ENCODE measurements at regions of chr3 and their contacts with region 1.

Region 1: DNA sequence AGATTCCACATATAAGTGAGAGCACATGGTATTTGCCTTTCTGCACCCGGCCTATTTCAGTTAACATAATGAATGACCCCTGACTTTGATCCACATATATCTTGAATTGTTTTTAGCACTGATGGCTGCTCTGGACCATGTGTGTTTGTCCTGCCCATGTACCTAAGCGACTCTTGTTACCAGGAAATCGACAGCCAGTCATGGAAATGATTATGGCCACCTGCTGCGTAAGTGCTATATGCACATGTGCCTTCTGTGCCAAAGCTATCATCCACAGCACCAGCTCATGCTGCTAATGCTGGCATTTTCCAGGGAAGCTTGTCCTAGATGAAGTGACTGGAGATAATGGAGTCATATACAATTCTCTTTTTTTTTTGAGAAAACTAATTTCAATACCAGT is 103.7 kb downstream of the PEX5L start:
- DNase-seq: no peak
- ATAC-seq: no peak

Region 2: DNA sequence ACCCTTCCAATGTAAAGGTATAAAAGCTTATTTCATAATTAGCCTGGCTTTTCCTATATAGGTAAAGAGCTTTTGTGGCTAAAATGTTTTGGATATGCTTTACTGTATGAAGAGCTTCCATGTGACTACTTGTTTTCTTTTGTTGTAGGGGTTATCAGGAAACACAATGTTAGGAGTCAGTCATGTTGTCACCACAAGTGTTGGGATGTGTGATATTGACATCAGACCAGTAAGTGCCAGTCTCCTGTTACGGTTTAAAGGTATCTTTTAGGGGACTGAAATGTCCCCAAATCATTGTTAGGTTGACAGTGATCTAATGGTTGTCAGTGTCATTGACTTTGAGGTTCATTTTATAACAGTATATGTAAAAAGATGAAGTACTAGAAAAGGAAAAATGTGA is 352.1 kb before region 1 on chr3:
- intact Hi-C with region 1: no loop called
- DNase-seq: no peak
- ATAC-seq: no peak

Region 3: GRCh38 chr3:179872842-179873241 is 60.2 kb before region 1 on chr3:
- intact Hi-C with region 1: no loop called
- DNase-seq: no peak
- ATAC-seq: no peak

Region 4: DNA sequence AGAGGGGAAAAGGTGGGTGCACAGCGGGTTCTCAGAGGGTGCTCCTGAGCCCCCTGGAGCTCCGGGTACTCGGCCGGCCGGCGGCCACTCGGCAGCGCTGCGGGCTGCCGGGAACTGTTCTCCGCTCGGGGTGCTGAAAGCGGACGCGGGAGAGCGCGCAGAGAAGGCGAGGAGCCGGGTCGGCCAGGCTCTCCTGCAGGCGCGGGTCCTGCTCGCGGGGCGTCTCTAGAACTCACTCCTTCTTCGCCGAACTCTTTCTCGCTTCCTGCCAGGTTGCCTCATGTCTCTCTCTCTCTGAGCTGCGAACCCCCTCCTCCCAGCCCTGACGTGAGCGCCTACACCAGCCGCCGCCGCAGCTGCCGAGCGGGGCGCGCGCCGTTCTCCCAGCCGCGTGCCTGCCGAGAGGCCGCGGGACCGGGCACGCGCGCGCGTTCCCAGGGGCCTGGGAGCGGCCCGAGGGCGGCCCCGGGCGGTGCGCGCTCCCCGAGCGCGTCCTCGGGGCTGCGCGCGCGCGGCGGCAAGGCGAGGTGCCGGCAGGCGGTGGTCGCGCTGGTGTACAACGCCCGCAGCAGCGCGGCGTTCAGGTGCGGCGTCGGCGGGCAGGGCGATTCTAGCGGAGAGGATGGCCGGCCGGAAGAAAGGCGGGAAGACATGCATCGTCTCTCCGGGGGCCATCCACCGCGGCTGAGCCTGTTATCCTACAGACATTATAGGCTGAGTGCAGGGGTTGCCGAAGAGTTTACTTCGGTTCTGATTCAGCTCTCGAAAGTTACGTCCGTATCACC is 103.8 kb after region 1 on chr3 and contains the start of gene PEX5L:
- intact Hi-C with region 1: no loop called
- DNase-seq: peak; percentile 71
- ATAC-seq: peak; percentile 57
- total RNA-seq, gene PEX5L: 0.16 TPM

Region 5: GRCh38 chr3:180594631-180595558 is 661.8 kb after region 1 on chr3:
- intact Hi-C with region 1: loop called (anchors 5 kb)
- DNase-seq: no peak
- ATAC-seq: no peak

Measured in Right ventricle myocardium inferior (tissue), 1 donor.